ENCODE measurements at regions of chr12 and their contacts with region 1.

Region 1: GRCh38 chr12:27424631-27425230 is 21.8 kb upstream of the SMCO2 start:
- DNase-seq: no peak
- H3K4me3 ChIP-seq: no peak overlapping the region
- H3K27ac ChIP-seq: no peak overlapping the region
- H3K4me1 ChIP-seq: peaks cover 0 to 5% (median 0%) of the 10 kb centered on the region in 3 donors
- H3K27me3 ChIP-seq: no peaks in the 10 kb centered on the region
- CTCF ChIP-seq: peak; percentile 22 to 67 (median 54)
- POLR2A ChIP-seq: no peak

Region 2: GRCh38 chr12:27511031-27511722 is 86.4 kb after region 1 on chr12:
- intact Hi-C with region 1: no loop called
- DNase-seq: no peak
- H3K4me3 ChIP-seq: no peak overlapping the region
- H3K27ac ChIP-seq: no peak overlapping the region
- H3K4me1 ChIP-seq: peaks cover 0 to 13% (median 3%) of the 10 kb centered on the region in 3 donors
- H3K27me3 ChIP-seq: no peaks in the 10 kb centered on the region
- CTCF ChIP-seq: no peak
- POLR2A ChIP-seq: no peak

Region 3: GRCh38 chr12:27602516-27602915 is 177.8 kb after region 1 on chr12:
- intact Hi-C with region 1: no loop called
- DNase-seq: no peak
- H3K4me3 ChIP-seq: no peak overlapping the region
- H3K27ac ChIP-seq: no peak overlapping the region
- H3K4me1 ChIP-seq: peaks cover 0 to 16% (median 3%) of the 10 kb centered on the region in 3 donors
- H3K27me3 ChIP-seq: no peaks in the 10 kb centered on the region
- CTCF ChIP-seq: no peak
- POLR2A ChIP-seq: no peak

Region 4: DNA sequence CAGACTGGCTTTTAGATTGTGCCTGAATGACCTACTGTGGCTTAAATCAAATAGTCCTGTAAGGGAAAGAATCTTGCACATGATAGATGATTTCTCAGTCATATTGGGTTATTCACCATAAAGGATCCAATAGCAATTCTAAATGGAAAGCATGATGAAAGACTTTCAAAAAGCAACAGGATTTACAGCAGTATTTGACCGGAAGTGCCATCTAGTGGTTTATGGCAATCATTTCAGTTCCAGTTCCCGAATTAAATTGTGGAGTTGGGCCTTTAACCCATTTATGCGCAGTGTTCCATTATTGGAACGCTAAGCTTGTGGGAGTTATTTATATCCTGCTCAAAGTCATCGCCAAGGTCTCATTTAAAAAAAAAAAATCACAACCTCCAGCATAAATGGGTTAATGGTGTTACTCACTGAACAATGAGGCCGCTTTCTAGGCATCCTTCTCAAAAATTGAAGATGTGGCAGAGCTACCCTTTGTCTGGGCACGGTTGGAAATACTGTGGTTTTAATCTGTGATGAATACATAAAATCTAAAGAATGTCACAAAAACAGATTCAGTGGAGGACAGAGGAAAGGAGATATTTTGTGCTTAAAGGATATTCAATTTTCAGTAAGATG is 210.7 kb after region 1 on chr12:
- intact Hi-C with region 1: loop called (anchors 5 kb)
- DNase-seq: no peak
- H3K4me3 ChIP-seq: no peak overlapping the region
- H3K27ac ChIP-seq: no peak overlapping the region
- H3K4me1 ChIP-seq: peaks cover 0 to 14% (median 0%) of the 10 kb centered on the region in 3 donors
- H3K27me3 ChIP-seq: no peaks in the 10 kb centered on the region
- CTCF ChIP-seq: peak in 5 of 6 experiments; percentile 57 to 76 (median 69)
- POLR2A ChIP-seq: no peak

Measured in esophagus squamous epithelium (tissue), 5 donors.